ENCODE measurements at regions of chr4 and their contacts with region 1.

Region 1: DNA sequence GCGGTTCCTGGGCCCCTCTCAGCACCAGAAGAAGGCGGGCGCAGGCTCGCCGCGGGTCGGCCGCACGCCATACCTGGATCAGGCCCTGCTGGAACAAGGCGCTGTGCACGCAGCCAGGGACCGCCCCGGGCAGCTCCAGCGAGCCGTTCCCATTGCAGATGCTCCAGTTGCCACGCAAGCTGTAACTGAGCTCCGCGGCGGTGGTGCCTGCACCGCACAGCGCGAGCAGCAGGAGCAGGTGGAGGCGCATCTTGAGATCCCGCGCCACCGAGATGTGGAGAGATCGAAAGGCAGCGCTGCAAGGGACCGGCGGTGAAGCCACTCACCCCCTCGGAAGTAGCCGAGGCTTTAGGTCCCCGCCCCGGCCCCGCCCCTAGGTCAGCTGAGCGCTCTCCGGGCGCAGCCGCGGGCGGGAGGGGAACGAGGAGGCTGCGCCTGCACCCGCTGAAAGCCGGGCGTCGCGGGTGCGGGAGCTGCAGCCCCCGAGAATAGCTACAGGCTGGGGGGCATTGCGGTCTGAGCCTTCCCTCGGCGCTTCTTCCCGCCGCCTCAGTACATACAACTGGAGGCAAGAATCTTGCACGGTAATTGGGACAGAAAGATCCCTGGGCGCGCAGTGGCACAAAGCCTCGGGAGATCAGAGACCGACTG is at the start of gene MANBA:
- DNase-seq: peak; percentile 77
- ATAC-seq: peak; percentile 79
- H3K4me3 Mint-ChIP-seq: peak within 1 kb of the TSS; percentile 93
- H3K27ac Mint-ChIP-seq: peak within 1 kb of the TSS; percentile 96
- H3K4me1 Mint-ChIP-seq: peaks cover 51% of the 10 kb centered on the region
- H3K27me3 Mint-ChIP-seq: no peaks in the 10 kb centered on the region
- CTCF ChIP-seq: no peak
- total RNA-seq, gene MANBA: 41.2 and 55.3 TPM in 2 replicates

Region 2: GRCh38 chr4:102402223-102402622 is 358.5 kb before region 1 on chr4:
- CTCF ChIA-PET with region 1: no interaction called
- POLR2A ChIA-PET with region 1: interaction called, 10 read pairs
- intact Hi-C with region 1: no loop called
- DNase-seq: no peak
- ATAC-seq: no peak
- H3K4me3 Mint-ChIP-seq: no peak overlapping the region
- H3K27ac Mint-ChIP-seq: no peak overlapping the region
- H3K4me1 Mint-ChIP-seq: peaks cover 2% of the 10 kb centered on the region
- H3K27me3 Mint-ChIP-seq: no peaks in the 10 kb centered on the region
- CTCF ChIP-seq: no peak

Region 3: DNA sequence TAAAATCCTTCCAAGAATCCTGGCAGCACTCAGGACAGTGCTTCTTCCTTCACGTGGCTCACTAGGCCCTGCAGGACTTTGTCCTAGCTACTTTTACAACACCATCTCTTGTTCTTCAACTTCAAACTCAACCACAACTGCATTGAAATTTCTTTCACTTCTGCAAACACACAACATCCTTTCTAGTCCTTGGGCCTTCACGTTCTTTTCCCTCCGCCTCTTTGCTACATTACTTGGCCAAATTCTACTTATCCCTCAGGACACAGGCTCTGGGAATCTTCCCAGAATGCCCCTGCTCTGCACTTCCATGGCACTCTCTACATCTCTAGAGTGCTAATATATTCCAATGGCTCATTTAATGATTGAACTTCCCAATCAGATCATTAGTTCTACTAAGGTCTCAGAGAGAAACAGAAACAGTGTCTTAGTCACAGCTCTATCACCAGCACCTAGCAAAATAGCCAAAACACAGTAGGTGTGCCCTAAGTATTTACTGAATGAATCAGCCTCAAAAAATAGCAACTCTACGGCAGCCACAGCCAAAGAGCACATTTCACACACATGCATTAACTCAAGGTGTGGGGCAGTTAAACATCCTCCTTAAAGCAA is 73.3 kb before region 1 on chr4:
- CTCF ChIA-PET with region 1: no interaction called
- POLR2A ChIA-PET with region 1: interaction called, 10 read pairs
- intact Hi-C with region 1: loop called (anchors 1 kb)
- DNase-seq: no peak
- ATAC-seq: peak; percentile 74
- H3K4me3 Mint-ChIP-seq: no peak overlapping the region
- H3K27ac Mint-ChIP-seq: no peak overlapping the region
- H3K4me1 Mint-ChIP-seq: no peaks in the 10 kb centered on the region
- H3K27me3 Mint-ChIP-seq: no peaks in the 10 kb centered on the region
- CTCF ChIP-seq: no peak

Region 4: DNA sequence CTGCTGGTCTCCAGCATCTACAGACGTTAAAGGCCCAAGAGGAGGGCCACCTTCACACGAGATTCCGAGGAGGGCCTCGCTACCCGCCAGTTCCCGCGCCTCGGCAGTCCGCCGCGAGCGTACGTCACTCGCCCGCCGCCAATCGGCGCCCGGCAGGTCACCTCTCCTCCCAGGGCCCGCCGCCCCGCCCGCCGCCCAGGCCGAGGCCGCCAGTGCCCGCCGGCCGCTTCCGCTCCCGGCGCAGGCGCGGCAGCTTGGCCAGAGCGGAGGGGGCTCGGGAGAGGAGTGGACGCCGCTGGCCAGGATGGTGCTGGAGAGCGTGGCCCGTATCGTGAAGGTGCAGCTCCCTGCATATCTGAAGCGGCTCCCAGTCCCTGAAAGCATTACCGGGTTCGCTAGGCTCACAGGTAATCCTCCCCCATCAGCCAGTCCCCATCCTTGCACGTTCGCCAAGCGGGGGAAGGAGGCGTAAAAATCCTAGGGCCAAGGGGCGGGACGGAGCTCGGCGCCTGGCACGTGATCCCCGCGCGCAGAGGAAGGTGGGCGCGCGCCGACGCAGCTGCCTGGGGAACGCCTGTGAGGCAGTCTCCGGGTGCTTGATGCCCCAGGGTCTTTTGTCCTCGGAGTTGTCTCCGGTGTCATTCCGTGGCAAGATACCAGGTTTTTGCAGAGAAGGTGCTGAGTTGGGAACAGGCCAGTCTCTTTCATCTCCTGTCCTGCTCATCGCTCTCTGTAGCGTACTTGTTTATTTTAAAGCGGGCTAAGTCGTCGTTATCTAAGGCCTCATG is 108.2 kb after region 1 on chr4 and contains the start of gene CISD2:
- CTCF ChIA-PET with region 1: no interaction called
- POLR2A ChIA-PET with region 1: interaction called, 30 read pairs
- intact Hi-C with region 1: loop called (anchors 1 kb)
- DNase-seq: peak; percentile 91
- ATAC-seq: peak; percentile 86
- H3K4me3 Mint-ChIP-seq: peak within 1 kb of the TSS; percentile 97
- H3K27ac Mint-ChIP-seq: peak within 1 kb of the TSS; percentile 97
- H3K4me1 Mint-ChIP-seq: peaks cover 51% of the 10 kb centered on the region
- H3K27me3 Mint-ChIP-seq: no peaks in the 10 kb centered on the region
- CTCF ChIP-seq: no peak
- total RNA-seq, gene CISD2: 12.6 and 13.7 TPM in 2 replicates

Region 5: DNA sequence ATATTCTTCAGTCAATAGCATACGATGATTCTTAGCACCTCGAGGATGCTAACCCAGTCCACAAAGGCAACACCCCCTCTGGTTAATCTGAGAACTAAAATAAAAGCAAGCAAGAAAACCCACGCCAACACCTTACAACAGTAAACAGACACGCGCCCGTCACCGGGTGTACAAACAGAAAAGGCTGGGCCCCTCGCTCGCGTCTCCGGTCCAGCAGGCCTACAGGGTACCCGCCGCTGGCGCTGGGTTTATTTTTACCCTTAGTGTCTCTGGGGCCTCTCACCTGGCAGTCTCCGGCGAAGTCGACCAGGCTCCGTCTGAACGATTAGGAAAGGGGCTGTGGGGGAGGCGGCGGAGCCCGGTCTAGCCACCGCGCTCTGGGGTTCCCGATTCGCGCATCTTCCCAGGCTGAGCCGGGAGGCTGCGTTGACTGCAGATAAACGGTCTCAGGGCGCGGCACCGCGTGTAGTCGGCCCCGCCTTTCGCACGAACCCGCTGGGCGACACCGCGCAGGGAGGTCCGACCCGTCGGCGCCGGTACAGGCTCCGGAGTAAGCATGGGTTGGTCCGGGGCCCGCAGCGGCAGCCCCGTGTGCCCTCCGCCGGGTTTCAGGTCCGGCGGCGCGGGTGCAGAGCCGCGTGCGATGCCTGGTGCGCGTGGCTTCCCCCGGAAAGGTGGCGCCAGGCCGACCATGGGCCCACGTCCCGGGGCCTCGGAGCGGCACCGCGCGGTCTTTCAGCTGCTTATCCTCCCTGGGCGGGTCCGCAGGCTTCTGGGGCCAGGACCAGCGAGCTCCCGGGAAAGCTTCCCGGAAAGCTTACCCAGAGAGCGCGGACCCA is 315.4 kb after region 1 on chr4:
- CTCF ChIA-PET with region 1: no interaction called
- POLR2A ChIA-PET with region 1: interaction called, 9 read pairs
- intact Hi-C with region 1: loop called (anchors 5 kb)
- DNase-seq: peak; percentile 69
- ATAC-seq: peak; percentile 64
- H3K4me3 Mint-ChIP-seq: peak overlapping the region; percentile 96
- H3K27ac Mint-ChIP-seq: peak overlapping the region; percentile 99
- H3K4me1 Mint-ChIP-seq: peaks cover 45% of the 10 kb centered on the region
- H3K27me3 Mint-ChIP-seq: no peaks in the 10 kb centered on the region
- CTCF ChIP-seq: no peak